Cardiac septum (tissue), 1 donor: ENCODE measurements at regions of chr14 and their contacts with region 1.

Region 1: GRCh38 chr14:50342221-50343078 is 30.3 kb downstream of the DMAC2L start:
- DNase-seq: peak; percentile 79

Region 2: GRCh38 chr14:50299585-50299984 is 42.9 kb before region 1 on chr14:
- intact Hi-C with region 1: no loop called
- DNase-seq: no peak

Region 3: DNA sequence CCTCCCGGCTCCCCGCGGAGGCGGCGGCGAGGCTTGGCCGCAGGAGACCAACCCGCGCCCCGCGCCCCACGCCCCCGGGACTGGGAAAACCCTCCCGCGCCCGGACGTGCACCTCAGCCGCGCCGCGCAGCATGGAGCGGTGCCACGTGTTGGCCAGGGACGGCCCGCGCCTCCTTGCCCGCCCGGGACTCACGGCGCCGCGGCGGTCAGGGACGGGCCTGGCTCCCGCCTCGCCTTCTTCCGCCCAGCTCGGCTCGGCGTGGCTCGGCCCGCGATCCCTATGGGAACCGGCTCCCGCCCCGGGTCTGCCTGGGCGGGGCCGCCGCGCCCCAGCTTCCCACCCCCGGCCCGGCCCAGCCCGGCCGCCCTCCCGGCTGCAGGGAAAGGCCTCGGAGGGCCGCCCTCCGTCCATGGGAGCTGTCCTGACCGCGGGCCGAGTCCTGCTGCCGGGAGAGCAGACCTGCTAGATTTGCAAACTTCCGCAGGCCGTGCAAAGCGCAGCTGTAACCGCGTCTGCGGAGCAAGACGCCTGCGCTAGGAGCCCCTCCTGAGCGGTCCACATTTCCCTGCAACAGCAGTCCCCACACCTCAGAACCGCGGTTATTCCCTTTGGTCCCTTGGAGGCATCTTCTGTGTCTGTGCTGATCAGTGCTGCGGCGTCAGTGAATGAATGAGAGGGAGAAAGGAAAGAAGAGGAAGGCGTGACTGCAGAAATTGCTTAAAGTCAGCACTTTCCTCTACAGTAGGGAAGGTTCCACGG is 54.4 kb after region 1 on chr14 and contains the start of gene CDKL1:
- intact Hi-C with region 1: loop called (anchors 5 kb)
- DNase-seq: peak; percentile 86
- total RNA-seq, gene CDKL1: 3.8 TPM

Region 4: GRCh38 chr14:50532502-50533240 is 190.2 kb after region 1 on chr14 and contains the start of gene MAP4K5:
- intact Hi-C with region 1: loop called (anchors 1 kb)
- DNase-seq: peak; percentile 95
- total RNA-seq, gene MAP4K5: 19.1 TPM